ENCODE measurements at regions of chr1 and their contacts with region 1.

Region 1: DNA sequence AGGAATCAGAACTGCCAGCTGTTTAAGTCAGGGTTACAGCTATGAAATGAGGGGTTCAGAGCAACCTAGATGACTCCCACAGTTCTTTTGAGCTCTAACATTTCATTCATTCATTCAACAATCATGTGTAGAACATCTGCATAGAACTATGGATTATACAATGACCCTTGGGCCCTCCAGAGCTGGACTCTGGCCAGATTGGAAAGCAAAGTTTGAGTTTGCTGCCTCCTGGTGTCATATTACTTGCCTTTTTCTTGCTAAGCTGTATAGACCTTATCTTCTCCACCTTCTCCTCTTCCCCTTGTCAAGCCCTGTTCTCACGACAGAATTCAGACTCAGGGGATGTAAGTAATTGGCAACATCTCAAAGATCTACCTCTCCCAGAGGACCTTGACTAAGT is 4.0 kb downstream of the CASQ2 start:
- DNase-seq: peak in 1 of 2 donors; percentile 36
- ATAC-seq: no peak
- H3K4me3 ChIP-seq: peak overlapping the region in 6 of 10 donors; percentile 49 to 69 (median 63)
- H3K27ac ChIP-seq: peak overlapping the region in 4 of 10 donors; percentile 14 to 97 (median 72)
- H3K4me1 ChIP-seq: peaks cover 0 to 50% (median 11%) of the 10 kb centered on the region in 9 donors
- H3K27me3 ChIP-seq: no peaks in the 10 kb centered on the region
- CTCF ChIP-seq: peak in 8 of 9 donors; percentile 7 to 67 (median 51)

Region 2: GRCh38 chr1:115609021-115609420 is 155.5 kb before region 1 on chr1:
- intact Hi-C with region 1: loop called in 3 of 10 experiments (anchors 2 to 10 kb)
- DNase-seq: no peak
- ATAC-seq: no peak
- H3K4me3 ChIP-seq: no peak overlapping the region
- H3K27ac ChIP-seq: no peak overlapping the region
- H3K4me1 ChIP-seq: peaks cover 0 to 9% (median 3%) of the 10 kb centered on the region in 9 donors
- H3K27me3 ChIP-seq: no peaks in the 10 kb centered on the region
- CTCF ChIP-seq: no peak

Region 3: GRCh38 chr1:115717541-115717940 is 47.0 kb before region 1 on chr1:
- intact Hi-C with region 1: loop called in 6 of 10 experiments (anchors 2 to 5 kb)
- DNase-seq: peak in 1 of 2 donors; percentile 30
- ATAC-seq: peak in 1 of 8 donors; percentile 17
- H3K4me3 ChIP-seq: no peak overlapping the region
- H3K27ac ChIP-seq: no peak overlapping the region
- H3K4me1 ChIP-seq: peaks cover 0 to 2% (median 0%) of the 10 kb centered on the region in 9 donors
- H3K27me3 ChIP-seq: no peaks in the 10 kb centered on the region
- CTCF ChIP-seq: peak; percentile 7 to 62 (median 54)

Region 4: GRCh38 chr1:115727706-115728249 is 36.8 kb before region 1 on chr1:
- intact Hi-C with region 1: loop called in 1 of 10 experiments (anchors 5 kb)
- DNase-seq: peak; percentile 50 to 59
- ATAC-seq: peak; percentile 61 to 93 (median 80)
- H3K4me3 ChIP-seq: no peak overlapping the region
- H3K27ac ChIP-seq: peak overlapping the region in 9 of 10 donors; percentile 62 to 86 (median 78)
- H3K4me1 ChIP-seq: peaks cover 5 to 62% (median 40%) of the 10 kb centered on the region in 9 donors
- H3K27me3 ChIP-seq: no peaks in the 10 kb centered on the region
- CTCF ChIP-seq: no peak

Measured in heart right ventricle (tissue), 16 donors.